Mammary epithelial cell (primary cell): ENCODE measurements at regions of chr12 and their contacts with region 1.

Region 1: GRCh38 chr12:5022465-5023061 is 21.1 kb upstream of the KCNA5 start:
- DNase-seq: peak; percentile 43
- H3K4me3 ChIP-seq: no peak overlapping the region
- H3K27ac ChIP-seq: no peak overlapping the region
- H3K4me1 ChIP-seq: peaks cover 6% of the 10 kb centered on the region
- H3K27me3 ChIP-seq: peaks cover 3% of the 10 kb centered on the region
- CTCF ChIP-seq: peak; percentile 81 to 94

Region 2: GRCh38 chr12:4956054-4956453 is 66.5 kb before region 1 on chr12:
- CTCF ChIA-PET with region 1: no interaction called
- dilution Hi-C with region 1: loop called (anchors 5 kb)
- in situ Hi-C with region 1: no loop called
- intact Hi-C with region 1: no loop called
- DNase-seq: no peak
- H3K4me3 ChIP-seq: no peak overlapping the region
- H3K27ac ChIP-seq: no peak overlapping the region
- H3K4me1 ChIP-seq: no peaks in the 10 kb centered on the region
- H3K27me3 ChIP-seq: peaks cover 2% of the 10 kb centered on the region
- CTCF ChIP-seq: no peak

Region 3: GRCh38 chr12:4987076-4987760 is 35.3 kb before region 1 on chr12:
- CTCF ChIA-PET with region 1: no interaction called
- dilution Hi-C with region 1: no loop called
- in situ Hi-C with region 1: no loop called
- intact Hi-C with region 1: no loop called
- DNase-seq: no peak
- H3K4me3 ChIP-seq: no peak overlapping the region
- H3K27ac ChIP-seq: no peak overlapping the region
- H3K4me1 ChIP-seq: no peaks in the 10 kb centered on the region
- H3K27me3 ChIP-seq: no peaks in the 10 kb centered on the region
- CTCF ChIP-seq: no peak

Region 4: DNA sequence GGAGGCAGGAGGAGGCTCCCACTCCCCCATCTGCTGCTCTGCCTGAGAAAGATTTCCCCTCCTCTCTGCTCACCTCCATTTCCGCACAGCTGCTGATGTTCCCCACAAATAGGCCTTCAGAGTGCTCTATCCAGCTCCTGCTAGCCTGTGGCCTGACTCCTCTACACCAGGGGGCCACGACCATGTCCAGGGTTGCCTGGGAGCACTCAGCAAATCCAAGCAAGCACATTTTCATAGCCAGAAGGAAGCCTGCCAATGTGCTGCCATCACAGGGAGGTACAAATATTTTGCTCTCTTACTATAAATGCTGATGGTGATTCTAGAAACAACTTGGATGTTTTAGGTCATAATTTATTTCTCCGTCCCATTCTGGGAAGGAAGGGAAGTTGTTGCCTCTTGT is 38.4 kb after region 1 on chr12:
- CTCF ChIA-PET with region 1: no interaction called
- dilution Hi-C with region 1: loop called (anchors 5 kb)
- in situ Hi-C with region 1: no loop called
- intact Hi-C with region 1: no loop called
- DNase-seq: no peak
- H3K4me3 ChIP-seq: no peak overlapping the region
- H3K27ac ChIP-seq: no peak overlapping the region
- H3K4me1 ChIP-seq: no peaks in the 10 kb centered on the region
- H3K27me3 ChIP-seq: peaks cover 5% of the 10 kb centered on the region
- CTCF ChIP-seq: no peak

Region 5: DNA sequence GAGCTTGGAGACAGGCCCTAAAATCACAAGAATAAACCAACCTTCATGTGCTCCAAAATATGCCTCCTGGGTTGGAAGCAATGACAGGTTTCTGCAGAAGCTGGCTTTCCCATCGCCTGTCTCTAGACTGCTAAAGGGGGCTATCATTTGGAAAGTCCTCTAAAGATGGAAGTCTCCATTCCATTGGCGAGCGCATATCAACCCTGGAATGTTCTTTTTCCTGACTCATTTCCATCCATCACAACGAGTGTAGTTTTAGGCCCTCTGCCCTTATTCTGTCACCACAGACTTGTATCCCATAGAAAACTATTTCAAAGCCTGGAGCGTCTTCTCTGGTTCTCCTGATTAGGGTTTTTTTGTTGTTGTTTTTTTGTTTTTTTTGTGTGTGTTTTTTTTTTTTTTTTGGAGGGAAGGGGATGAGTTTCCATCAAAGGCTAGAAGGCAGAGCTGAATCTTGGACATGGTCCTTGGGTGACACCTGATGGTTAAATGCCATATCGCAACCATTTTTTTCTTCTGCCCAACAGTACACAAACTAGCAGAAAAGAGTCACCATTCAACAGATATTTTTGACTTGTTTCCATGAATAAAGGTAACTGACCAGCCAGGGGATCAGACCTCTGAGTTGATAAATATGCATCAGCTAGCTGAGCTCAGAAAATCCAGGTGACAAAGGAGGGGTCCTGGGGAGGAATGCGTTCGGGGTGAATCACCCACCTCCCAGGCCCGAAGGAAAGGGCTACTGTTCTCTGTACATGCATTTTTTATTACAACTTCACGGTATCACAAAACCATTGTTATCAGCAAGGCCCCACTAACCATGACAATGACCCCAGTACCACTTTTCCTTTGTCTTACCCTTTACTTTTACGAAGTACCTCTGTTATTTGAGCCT is 61.6 kb after region 1 on chr12:
- CTCF ChIA-PET with region 1: interaction called, 3 read pairs
- dilution Hi-C with region 1: no loop called
- in situ Hi-C with region 1: loop called (anchors 5 kb)
- intact Hi-C with region 1: loop called (anchors 1 kb)
- DNase-seq: peak; percentile 40
- H3K4me3 ChIP-seq: no peak overlapping the region
- H3K27ac ChIP-seq: no peak overlapping the region
- H3K4me1 ChIP-seq: peaks cover 9% of the 10 kb centered on the region
- H3K27me3 ChIP-seq: no peaks in the 10 kb centered on the region
- CTCF ChIP-seq: peak; percentile 51 to 78